Activated B cell treated with CpG ODN at 0.5 μM for 24 hours (primary cell): ENCODE measurements at regions of chr13 and their contacts with region 1.

Region 1: GRCh38 chr13:36981156-36981743 is 17.9 kb downstream of the ALG5 start:
- DNase-seq: no peak
- ATAC-seq: peak; percentile 34
- H3K4me3 Mint-ChIP-seq: no peak overlapping the region
- H3K27ac Mint-ChIP-seq: no peak overlapping the region
- H3K4me1 Mint-ChIP-seq: no peaks in the 10 kb centered on the region
- H3K27me3 Mint-ChIP-seq: no peaks in the 10 kb centered on the region
- CTCF ChIP-seq: no peak

Region 2: GRCh38 chr13:36282818-36283445 is 698.3 kb before region 1 on chr13:
- CTCF ChIA-PET with region 1: interaction called, 10 read pairs
- POLR2A ChIA-PET with region 1: no interaction called
- intact Hi-C with region 1: loop called (anchors 1 kb)
- DNase-seq: no peak
- ATAC-seq: no peak
- H3K4me3 Mint-ChIP-seq: no peak overlapping the region
- H3K27ac Mint-ChIP-seq: no peak overlapping the region
- H3K4me1 Mint-ChIP-seq: no peaks in the 10 kb centered on the region
- H3K27me3 Mint-ChIP-seq: no peaks in the 10 kb centered on the region
- CTCF ChIP-seq: no peak

Region 3: DNA sequence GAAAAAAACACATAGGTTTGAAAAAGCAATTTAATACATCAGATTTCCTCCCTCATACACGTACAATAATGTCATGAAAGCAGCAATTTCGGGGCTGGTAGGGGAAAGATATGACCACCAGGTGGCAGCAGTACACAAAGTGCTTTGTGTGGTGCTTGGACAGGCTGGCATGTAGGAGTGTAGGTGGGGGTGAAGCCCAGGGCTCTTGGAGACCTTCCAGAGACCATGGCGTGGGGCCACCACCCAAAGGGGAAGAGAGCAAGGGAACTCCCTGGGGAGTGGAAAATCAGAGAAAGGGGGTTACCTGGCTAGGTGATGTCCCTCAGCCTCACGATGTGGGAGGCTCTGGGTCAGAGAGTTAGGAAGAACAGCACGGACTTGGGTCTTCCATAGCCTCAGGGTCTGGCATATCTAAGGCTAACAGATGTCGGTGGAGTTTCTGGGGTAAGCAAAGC is 560.8 kb before region 1 on chr13:
- CTCF ChIA-PET with region 1: interaction called, 30 read pairs
- POLR2A ChIA-PET with region 1: no interaction called
- intact Hi-C with region 1: loop called (anchors 1 kb)
- DNase-seq: peak; percentile 34
- ATAC-seq: peak; percentile 86
- H3K4me3 Mint-ChIP-seq: no peak overlapping the region
- H3K27ac Mint-ChIP-seq: no peak overlapping the region
- H3K4me1 Mint-ChIP-seq: peaks cover 8% of the 10 kb centered on the region
- H3K27me3 Mint-ChIP-seq: peaks cover 13% of the 10 kb centered on the region
- CTCF ChIP-seq: peak; percentile 92

Region 4: GRCh38 chr13:36736119-36736726 is 245.0 kb before region 1 on chr13:
- CTCF ChIA-PET with region 1: no interaction called
- POLR2A ChIA-PET with region 1: no interaction called
- intact Hi-C with region 1: loop called (anchors 2 kb)
- DNase-seq: no peak
- ATAC-seq: no peak
- H3K4me3 Mint-ChIP-seq: no peak overlapping the region
- H3K27ac Mint-ChIP-seq: no peak overlapping the region
- H3K4me1 Mint-ChIP-seq: no peaks in the 10 kb centered on the region
- H3K27me3 Mint-ChIP-seq: no peaks in the 10 kb centered on the region
- CTCF ChIP-seq: peak; percentile 71

Region 5: GRCh38 chr13:36818804-36819738 is 162.2 kb before region 1 on chr13 and contains the start of gene RFXAP:
- CTCF ChIA-PET with region 1: interaction called, 5 read pairs
- POLR2A ChIA-PET with region 1: no interaction called
- intact Hi-C with region 1: loop called (anchors 2 kb)
- DNase-seq: peak; percentile 93
- ATAC-seq: peak; percentile 94
- H3K4me3 Mint-ChIP-seq: peak within 1 kb of the TSS; percentile 93
- H3K27ac Mint-ChIP-seq: peak within 1 kb of the TSS; percentile 90
- H3K4me1 Mint-ChIP-seq: peaks cover 44% of the 10 kb centered on the region
- H3K27me3 Mint-ChIP-seq: peaks cover 6% of the 10 kb centered on the region
- CTCF ChIP-seq: no peak
- total RNA-seq, gene RFXAP: 8.8 and 9.6 TPM in 2 replicates

Region 6: DNA sequence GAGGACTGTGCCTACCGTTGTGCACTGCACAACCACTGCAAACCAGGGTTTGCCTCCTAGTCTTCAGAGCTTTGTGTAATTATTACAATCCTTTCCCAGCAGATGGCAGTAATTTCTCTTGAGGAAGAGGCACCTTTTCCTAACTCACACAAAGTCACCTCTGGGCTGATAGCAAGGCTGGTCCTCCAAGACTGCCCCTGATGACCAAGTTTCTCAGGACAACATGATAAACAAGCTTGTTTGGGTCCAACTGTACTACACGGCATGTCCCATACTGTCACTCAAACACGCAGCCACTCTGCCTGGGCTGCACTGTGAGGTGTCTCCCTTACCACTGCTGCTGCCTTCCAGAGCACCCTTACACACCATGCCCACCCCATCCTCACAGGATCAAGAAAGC is 123.0 kb before region 1 on chr13:
- CTCF ChIA-PET with region 1: interaction called, 10 read pairs
- POLR2A ChIA-PET with region 1: no interaction called
- intact Hi-C with region 1: loop called (anchors 1 kb)
- DNase-seq: no peak
- ATAC-seq: no peak
- H3K4me3 Mint-ChIP-seq: no peak overlapping the region
- H3K27ac Mint-ChIP-seq: no peak overlapping the region
- H3K4me1 Mint-ChIP-seq: no peaks in the 10 kb centered on the region
- H3K27me3 Mint-ChIP-seq: peaks cover 11% of the 10 kb centered on the region
- CTCF ChIP-seq: no peak

Region 7: GRCh38 chr13:37416291-37417059 is 435.2 kb after region 1 on chr13:
- CTCF ChIA-PET with region 1: no interaction called
- POLR2A ChIA-PET with region 1: no interaction called
- intact Hi-C with region 1: no loop called
- DNase-seq: no peak
- ATAC-seq: no peak
- H3K4me3 Mint-ChIP-seq: no peak overlapping the region
- H3K27ac Mint-ChIP-seq: no peak overlapping the region
- H3K4me1 Mint-ChIP-seq: no peaks in the 10 kb centered on the region
- H3K27me3 Mint-ChIP-seq: no peaks in the 10 kb centered on the region
- CTCF ChIP-seq: no peak